Tibial artery (tissue), 4 donors: ENCODE measurements at regions of chr19 and their contacts with region 1.

Region 1: GRCh38 chr19:1315470-1316231 is 30.0 kb downstream of the EFNA2 start:
- DNase-seq: no peak
- H3K4me3 ChIP-seq: peak overlapping the region in 1 of 2 donors; percentile 27
- H3K27ac ChIP-seq: no peak overlapping the region
- H3K4me1 ChIP-seq: peaks cover 0 to 20% (median 7%) of the 10 kb centered on the region in 4 donors
- H3K27me3 ChIP-seq: peaks cover 0 to 92% of the 10 kb centered on the region in 2 donors
- CTCF ChIP-seq: peak; percentile 50 to 53

Region 2: GRCh38 chr19:1122972-1123363 is 192.7 kb before region 1 on chr19:
- intact Hi-C with region 1: loop called (anchors 5 kb)
- DNase-seq: no peak
- H3K4me3 ChIP-seq: no peak overlapping the region
- H3K27ac ChIP-seq: no peak overlapping the region
- H3K4me1 ChIP-seq: peaks cover 0 to 22% (median 18%) of the 10 kb centered on the region in 4 donors
- H3K27me3 ChIP-seq: no peaks in the 10 kb centered on the region
- CTCF ChIP-seq: no peak